ENCODE measurements at regions of chrX and their contacts with region 1.

Region 1: GRCh38 chrX:4193500-4194190 is 480.2 kb upstream of the PRKX start:
- DNase-seq: no peak
- ATAC-seq: no peak

Region 2: DNA sequence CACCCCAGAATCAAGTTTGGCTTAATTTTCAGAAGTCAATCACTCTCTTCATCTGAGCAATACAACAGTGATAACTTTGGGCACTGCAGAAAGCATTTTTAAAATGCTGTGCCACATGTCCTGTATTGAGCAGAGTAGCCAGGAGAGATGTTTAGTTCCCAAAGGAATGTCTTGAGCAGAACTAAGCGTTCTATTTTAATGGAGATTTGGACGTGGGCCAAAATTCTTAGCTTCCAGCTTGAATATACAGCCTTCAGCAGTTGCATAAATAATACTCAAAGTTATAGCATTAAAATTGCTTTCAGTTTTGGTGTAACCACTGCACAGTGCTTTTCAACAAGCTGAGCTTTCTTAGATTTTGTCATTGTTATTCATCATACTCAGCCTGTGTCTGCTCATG is 1355.9 kb after region 1 on chrX:
- intact Hi-C with region 1: loop called (anchors 10 kb)
- DNase-seq: no peak
- ATAC-seq: no peak

Region 3: GRCh38 chrX:5807181-5807580 is 1613.5 kb after region 1 on chrX:
- intact Hi-C with region 1: no loop called
- DNase-seq: no peak
- ATAC-seq: no peak

Region 4: GRCh38 chrX:6053141-6053540 is 1859.5 kb after region 1 on chrX:
- intact Hi-C with region 1: loop called (anchors 5 kb)
- DNase-seq: no peak
- ATAC-seq: no peak